ENCODE measurements at regions of chr6 and their contacts with region 1.

Region 1: DNA sequence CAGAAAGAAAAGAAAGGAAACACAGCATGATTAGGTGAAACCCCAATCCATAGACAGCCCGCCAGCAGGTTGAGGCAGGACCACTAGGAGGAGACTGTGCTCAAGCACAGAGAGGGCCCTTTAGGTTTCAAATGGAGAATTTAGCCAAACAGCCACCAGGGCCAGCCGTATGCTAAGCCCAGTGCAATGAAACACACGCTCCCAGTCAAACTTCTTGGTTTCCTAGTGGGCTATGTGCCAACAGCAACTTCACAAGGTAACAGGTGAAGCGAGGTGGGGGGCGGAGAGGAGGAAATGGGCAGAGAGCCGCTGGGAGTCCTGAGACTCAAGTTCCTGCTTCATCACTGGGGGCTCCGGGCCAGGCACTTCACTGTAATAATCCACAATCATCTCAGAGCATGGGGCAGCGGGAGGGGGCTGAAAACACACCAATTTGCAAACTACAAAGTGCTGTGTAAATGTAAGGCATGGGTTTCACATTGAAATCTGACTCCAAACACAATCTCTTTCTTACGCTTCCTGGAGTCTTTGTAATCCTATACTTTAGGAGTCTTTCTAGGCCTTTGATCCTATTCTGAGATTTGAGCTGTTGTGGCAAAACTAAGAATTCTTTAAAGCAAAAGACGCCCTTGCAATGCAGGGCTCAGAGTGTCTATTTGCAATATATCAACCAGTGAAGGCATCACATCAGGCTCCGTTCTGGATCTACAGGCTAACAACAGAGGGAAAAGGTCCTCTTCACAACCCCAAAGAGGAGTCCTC is 117.3 kb downstream of the OPRM1 start:
- DNase-seq: peak; percentile 32
- H3K4me3 ChIP-seq: no peak overlapping the region
- H3K27ac ChIP-seq: no peak overlapping the region
- H3K4me1 ChIP-seq: peaks cover 4% of the 10 kb centered on the region
- H3K27me3 ChIP-seq: no peaks in the 10 kb centered on the region
- CTCF ChIP-seq: peak; percentile 30

Region 2: GRCh38 chr6:154092326-154092962 is 63.9 kb before region 1 on chr6:
- intact Hi-C with region 1: no loop called
- DNase-seq: no peak
- H3K4me3 ChIP-seq: no peak overlapping the region
- H3K27ac ChIP-seq: no peak overlapping the region
- H3K4me1 ChIP-seq: no peaks in the 10 kb centered on the region
- H3K27me3 ChIP-seq: no peaks in the 10 kb centered on the region
- CTCF ChIP-seq: no peak

Region 3: GRCh38 chr6:154277629-154278017 is 121.3 kb after region 1 on chr6:
- intact Hi-C with region 1: loop called (anchors 2 kb)
- DNase-seq: no peak
- H3K4me3 ChIP-seq: no peak overlapping the region
- H3K27ac ChIP-seq: no peak overlapping the region
- H3K4me1 ChIP-seq: no peaks in the 10 kb centered on the region
- H3K27me3 ChIP-seq: no peaks in the 10 kb centered on the region
- CTCF ChIP-seq: no peak

Region 4: DNA sequence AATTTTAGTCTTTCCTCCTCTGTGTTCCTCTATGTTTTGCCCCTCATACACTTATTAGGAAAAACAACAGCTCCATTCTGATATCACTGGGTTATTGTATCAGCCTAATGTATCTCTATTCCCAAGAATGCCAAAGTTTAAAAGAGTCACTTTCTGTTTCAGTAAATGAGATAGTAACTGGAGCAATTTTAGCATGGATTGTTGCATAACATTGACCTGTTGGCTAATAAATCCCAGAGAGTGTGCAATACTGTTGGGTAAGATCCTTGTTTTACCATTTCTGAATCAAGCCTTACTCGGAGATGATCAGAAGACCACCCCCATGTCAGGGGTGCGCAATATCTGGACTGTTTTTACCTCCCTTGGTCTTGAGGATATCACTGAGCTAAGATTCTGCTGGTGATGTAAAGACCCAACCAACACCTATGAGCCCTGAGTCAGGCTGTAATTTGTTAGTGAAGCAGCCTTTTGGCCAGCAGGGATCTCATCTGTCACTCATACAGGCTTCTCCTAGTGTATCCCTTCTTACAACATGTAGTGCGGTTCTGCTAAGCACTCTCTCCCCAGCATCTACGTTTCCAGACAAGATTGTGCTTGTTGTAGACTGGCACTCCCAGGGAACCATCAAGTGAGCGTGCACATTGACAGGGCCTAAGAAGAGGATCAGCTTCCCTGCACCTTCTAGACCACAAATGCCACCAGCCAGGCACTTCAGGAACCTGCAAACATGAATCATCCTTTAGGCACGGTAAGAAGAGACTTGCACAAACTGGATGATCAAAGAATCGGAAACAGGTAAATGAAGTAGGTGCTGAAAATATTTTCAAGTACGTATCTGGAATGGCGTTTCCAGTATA is 211.8 kb after region 1 on chr6:
- intact Hi-C with region 1: loop called (anchors 10 kb)
- DNase-seq: no peak
- H3K4me3 ChIP-seq: no peak overlapping the region
- H3K27ac ChIP-seq: no peak overlapping the region
- H3K4me1 ChIP-seq: no peaks in the 10 kb centered on the region
- H3K27me3 ChIP-seq: no peaks in the 10 kb centered on the region
- CTCF ChIP-seq: no peak

Region 5: GRCh38 chr6:154408891-154409500 is 252.7 kb after region 1 on chr6:
- intact Hi-C with region 1: loop called (anchors 5 kb)
- DNase-seq: no peak
- H3K4me3 ChIP-seq: no peak overlapping the region
- H3K27ac ChIP-seq: no peak overlapping the region
- H3K4me1 ChIP-seq: no peaks in the 10 kb centered on the region
- H3K27me3 ChIP-seq: no peaks in the 10 kb centered on the region
- CTCF ChIP-seq: peak; percentile 15